ENCODE measurements at regions of chr5 and their contacts with region 1.

Region 1: DNA sequence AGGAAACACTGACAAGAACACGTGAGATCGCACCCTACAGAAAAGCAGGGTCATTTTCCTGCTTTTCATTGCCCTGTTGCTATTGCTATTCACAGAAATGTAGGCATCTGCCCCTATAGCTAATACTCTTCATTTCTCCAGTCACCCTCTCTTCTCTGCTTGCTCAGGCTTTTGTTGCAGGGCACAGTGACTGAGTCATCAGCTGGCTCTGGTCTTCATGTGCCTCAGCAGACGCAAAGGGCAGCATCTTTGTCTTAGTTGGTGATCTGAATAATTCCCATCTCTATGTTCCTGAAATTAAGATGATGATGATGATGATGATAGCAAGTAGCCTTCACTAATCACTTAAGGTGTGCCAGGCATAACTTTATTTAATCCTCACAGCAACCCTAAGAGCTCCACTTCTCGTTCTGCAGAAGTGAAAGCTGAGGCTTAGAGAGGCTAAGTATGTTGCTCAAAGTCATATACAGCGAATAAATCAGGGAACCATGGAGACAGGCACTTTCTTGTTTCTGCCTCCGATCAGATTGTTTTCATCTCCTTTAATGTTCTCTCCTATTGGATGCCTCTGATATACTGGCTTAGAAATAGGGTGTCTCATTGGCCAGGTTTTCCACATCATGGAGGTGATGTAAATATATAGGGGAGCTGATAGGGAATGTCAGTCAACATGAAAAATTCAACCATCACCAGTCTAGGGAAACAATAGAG is 133.0 kb upstream of the STK32A start:
- DNase-seq: no peak
- H3K4me3 ChIP-seq: no peak overlapping the region
- CTCF ChIP-seq: no peak

Region 2: GRCh38 chr5:147017191-147017590 is 84.6 kb before region 1 on chr5:
- in situ Hi-C with region 1: no loop called
- DNase-seq: no peak
- H3K4me3 ChIP-seq: no peak overlapping the region
- CTCF ChIP-seq: no peak

Region 3: GRCh38 chr5:147046281-147046680 is 55.5 kb before region 1 on chr5:
- in situ Hi-C with region 1: no loop called
- DNase-seq: no peak
- H3K4me3 ChIP-seq: no peak overlapping the region
- CTCF ChIP-seq: no peak

Region 4: DNA sequence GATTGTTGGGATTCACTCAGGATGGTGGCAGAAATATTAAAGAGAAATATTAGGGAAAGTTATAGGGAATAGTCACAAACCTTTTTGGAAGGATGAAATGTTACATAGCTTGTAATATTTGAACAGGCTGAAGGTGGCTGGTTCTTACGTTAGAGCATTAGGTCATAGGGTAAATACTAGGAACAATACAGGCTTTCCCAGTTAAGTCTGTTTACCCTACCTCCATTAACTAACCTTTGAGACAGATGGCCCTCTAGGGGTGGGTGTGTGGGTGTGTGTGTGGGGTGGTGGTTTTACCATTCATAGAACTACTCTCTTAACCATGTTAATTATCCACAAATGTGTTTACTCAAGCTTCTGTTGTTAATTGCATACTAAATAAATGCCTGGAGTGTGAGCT is 38.7 kb after region 1 on chr5:
- in situ Hi-C with region 1: loop called (anchors 5 kb)
- DNase-seq: no peak
- H3K4me3 ChIP-seq: no peak overlapping the region
- CTCF ChIP-seq: no peak

Region 5: DNA sequence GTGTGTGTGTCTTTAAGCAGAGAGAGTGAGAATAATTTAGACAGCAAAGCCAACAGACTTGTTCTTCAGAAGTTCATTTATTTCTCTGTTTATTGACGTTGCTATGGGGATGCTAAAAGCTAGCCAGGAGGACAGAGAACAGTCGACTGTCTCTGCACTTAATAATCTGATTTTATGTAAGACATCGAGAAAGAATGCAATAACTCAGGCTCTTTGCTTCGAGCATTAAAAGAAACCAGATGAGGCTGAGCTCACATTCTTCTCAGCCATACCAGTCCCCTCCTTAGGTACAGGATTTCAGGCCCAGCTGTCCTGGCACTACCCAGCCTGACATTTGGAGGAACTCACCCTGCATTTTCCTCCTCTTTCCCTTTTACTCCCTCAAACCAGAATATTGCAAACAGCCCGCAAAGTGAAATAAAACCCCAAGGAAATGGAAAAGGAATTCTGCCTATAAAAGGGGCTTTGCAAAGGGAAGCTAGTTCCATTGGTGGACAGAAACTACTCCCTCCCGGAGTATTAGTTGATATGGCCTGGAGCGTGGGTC is 452.5 kb after region 1 on chr5:
- in situ Hi-C with region 1: no loop called
- DNase-seq: peak; percentile 73
- H3K4me3 ChIP-seq: no peak overlapping the region
- CTCF ChIP-seq: no peak